AG04449 (cell line): ENCODE measurements at regions of chr14 and their contacts with region 1.

Region 1: GRCh38 chr14:103078093-103078749 is 5.8 kb upstream of the LBHD2 start:
- DNase-seq: no peak
- H3K4me3 ChIP-seq: no peak overlapping the region
- CTCF ChIP-seq: peak; percentile 84

Region 2: DNA sequence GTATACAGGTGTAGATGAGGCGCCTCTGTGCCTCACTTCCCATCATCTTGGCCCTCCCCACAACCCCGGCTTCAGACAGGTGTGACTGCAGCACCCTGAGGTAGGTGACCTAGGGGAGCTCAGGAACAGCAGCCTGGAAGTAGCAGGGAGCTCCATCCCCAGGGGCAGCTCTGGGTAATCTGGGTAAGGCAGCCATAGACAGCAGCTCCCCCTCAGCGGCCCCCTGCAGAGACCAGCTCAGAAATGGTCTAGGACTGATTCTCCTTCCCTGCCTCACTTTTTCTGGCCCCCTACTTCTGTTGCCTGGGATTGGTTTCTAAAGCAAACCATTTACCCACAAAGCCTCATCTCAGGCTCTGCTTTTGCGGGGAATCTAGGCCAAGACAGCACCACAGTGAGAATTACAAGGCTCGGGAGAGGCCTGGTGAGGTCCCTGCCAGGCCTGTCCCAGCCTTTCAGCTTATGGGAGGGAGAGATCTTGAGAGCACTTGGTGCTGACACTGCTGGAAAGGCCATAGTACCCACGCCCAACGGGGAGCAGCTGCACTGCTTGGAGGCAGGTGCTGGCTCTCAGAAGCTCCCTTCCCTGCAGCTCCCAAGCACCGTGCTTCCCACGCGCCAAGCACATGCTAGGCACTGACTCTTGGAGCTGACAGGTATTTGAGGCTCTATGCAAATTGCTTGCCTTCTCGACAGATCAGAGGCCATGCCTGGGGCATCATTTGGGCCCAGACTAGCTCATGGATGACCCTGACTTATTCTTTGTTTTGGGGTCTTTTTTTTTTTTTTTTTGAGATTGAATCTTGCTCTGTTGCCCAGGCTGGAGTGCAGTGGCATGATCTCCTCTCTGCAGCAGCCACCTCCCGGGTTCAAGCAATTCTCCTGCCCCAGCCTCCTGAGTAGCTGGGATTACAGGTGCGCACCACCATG is 346.1 kb before region 1 on chr14:
- CTCF ChIA-PET with region 1: no interaction called
- POLR2A ChIA-PET with region 1: no interaction called
- DNase-seq: no peak
- H3K4me3 ChIP-seq: no peak overlapping the region
- CTCF ChIP-seq: no peak

Region 3: GRCh38 chr14:103045371-103045869 is 32.8 kb before region 1 on chr14:
- CTCF ChIA-PET with region 1: interaction called, 10 read pairs
- POLR2A ChIA-PET with region 1: no interaction called
- DNase-seq: no peak
- H3K4me3 ChIP-seq: no peak overlapping the region
- CTCF ChIP-seq: no peak

Region 4: GRCh38 chr14:103057365-103058096 is 20.7 kb before region 1 on chr14 and contains the start of gene CDC42BPB:
- CTCF ChIA-PET with region 1: interaction called, 15 read pairs
- POLR2A ChIA-PET with region 1: no interaction called
- DNase-seq: peak; percentile 24
- H3K4me3 ChIP-seq: peak within 1 kb of the TSS; percentile 97
- CTCF ChIP-seq: no peak

Region 5: DNA sequence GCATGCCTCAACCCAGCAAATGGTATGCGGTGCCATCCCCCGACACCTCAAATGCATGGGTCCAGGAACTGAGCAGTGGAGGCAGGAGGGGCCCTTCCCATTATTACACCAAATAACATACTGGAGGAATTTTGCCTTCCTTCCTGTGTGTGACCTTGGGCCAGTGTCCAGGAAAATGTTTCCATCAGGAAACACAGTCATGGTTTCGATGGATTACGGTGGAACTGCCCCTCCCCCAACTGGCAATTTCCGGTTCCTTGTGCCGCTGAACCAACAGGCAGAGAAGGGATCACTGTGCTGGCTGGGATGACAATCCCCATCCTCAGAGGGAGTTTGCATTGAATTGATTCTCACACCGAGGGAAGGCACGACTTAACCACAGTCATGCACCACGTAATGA is 11.8 kb before region 1 on chr14:
- CTCF ChIA-PET with region 1: interaction called, 17 read pairs
- POLR2A ChIA-PET with region 1: no interaction called
- DNase-seq: no peak
- H3K4me3 ChIP-seq: no peak overlapping the region
- CTCF ChIP-seq: no peak

Region 6: GRCh38 chr14:103091041-103091882 is 13.0 kb after region 1 on chr14:
- CTCF ChIA-PET with region 1: interaction called, 20 read pairs
- POLR2A ChIA-PET with region 1: no interaction called
- DNase-seq: no peak
- H3K4me3 ChIP-seq: peak overlapping the region; percentile 41
- CTCF ChIP-seq: peak; percentile 42

Region 7: DNA sequence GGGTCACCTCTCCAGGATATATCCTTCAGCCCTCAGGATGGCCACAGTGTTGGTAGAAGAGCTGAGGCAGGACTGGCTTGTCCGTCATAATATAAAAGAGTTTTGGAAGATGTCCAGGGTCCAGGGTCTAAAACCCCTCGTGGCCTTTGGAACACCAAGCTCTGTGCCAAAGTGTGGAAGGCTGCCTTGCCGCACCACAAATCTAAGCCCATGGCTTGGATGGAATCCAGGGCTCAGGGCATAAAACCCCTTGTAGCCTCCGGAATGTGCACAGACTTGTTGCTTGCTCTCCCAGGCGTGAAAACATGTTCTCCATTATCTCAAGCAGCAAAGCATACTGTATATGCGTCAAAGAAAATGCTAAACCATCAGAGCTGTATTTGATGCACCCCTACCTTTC is 91.7 kb after region 1 on chr14:
- CTCF ChIA-PET with region 1: no interaction called
- POLR2A ChIA-PET with region 1: no interaction called
- DNase-seq: no peak
- H3K4me3 ChIP-seq: no peak overlapping the region
- CTCF ChIP-seq: no peak

Region 8: GRCh38 chr14:103185051-103185992 is 107.1 kb after region 1 on chr14:
- CTCF ChIA-PET with region 1: interaction called, 55 read pairs
- POLR2A ChIA-PET with region 1: interaction called, 4 read pairs
- DNase-seq: no peak
- H3K4me3 ChIP-seq: no peak overlapping the region
- CTCF ChIP-seq: peak; percentile 34

Region 9: DNA sequence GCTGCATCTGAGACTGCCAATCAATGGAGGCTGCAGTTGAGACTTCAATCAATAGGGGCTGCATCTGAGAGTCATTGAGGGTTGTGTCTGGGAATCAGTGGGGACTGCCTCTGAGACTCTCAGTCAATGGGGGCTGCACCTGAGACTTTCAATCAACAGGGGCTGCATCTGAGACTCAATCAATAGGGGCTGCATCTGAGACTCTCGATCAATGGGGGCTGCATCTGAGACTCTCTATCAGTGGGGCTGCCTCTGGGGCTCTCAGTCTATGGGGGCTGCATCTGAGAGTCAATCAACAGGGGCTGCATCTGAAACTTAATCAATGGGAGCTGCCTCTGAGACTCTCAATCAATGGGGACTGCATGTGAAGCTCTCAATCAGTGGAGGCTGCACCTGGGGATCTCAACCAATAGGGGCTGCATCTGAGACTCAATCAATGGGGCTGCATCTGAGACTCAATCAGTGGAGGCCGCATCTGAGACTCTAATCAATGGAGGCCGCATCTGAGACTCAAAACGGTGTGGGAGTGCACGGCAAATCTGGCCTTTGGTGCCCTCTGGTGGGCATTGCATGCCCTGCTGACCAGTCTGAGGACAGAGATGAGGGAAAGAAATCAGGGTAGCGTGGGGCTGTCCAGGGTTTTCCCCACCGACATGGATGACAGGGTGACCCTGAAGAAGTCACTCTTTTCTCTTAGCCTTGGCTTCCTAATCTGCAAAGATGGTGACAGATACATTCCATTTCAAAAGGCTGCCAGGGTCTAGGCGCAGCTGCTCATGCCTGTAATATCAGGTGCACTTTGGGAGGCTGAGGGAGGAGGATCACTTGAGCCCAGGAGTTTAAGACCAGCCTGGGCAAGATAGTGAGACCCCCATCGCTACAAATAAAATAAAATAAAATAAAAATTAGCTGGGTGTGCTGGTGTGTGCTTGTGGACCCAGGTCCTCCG is 214.5 kb after region 1 on chr14:
- CTCF ChIA-PET with region 1: interaction called, 88 read pairs
- POLR2A ChIA-PET with region 1: no interaction called
- DNase-seq: no peak
- H3K4me3 ChIP-seq: no peak overlapping the region
- CTCF ChIP-seq: peak; percentile 92